ENCODE measurements at regions of chr1 and their contacts with region 1.

Region 1: GRCh38 chr1:26744075-26744959 is 43.4 kb upstream of the PIGV start:
- DNase-seq: peak; percentile 30 to 86 (median 79)
- ATAC-seq: peak; percentile 97
- H3K4me3 ChIP-seq: peak overlapping the region; percentile 39
- H3K4me3 Mint-ChIP-seq: peak overlapping the region; percentile 69 to 86 (median 77)
- H3K27ac ChIP-seq: peak overlapping the region; percentile 62
- H3K27ac Mint-ChIP-seq: peak overlapping the region; percentile 56 to 97 (median 90)
- H3K4me1 ChIP-seq: peaks cover 44 to 84% of the 10 kb centered on the region in 2 donors
- H3K4me1 Mint-ChIP-seq: peaks cover 59 to 96% (median 85%) of the 10 kb centered on the region in 7 donors
- H3K27me3 ChIP-seq: no peaks in the 10 kb centered on the region
- H3K27me3 Mint-ChIP-seq: no peaks in the 10 kb centered on the region

Region 2: GRCh38 chr1:26541816-26542711 is 202.3 kb before region 1 on chr1:
- CTCF ChIA-PET with region 1: no interaction called
- POLR2A ChIA-PET with region 1: no interaction called
- intact Hi-C with region 1: loop called in 1 of 2 experiments (anchors 2 kb)
- DNase-seq: peak; percentile 56 to 84 (median 66)
- ATAC-seq: peak; percentile 72
- H3K4me3 ChIP-seq: peak overlapping the region; percentile 33
- H3K4me3 Mint-ChIP-seq: peak overlapping the region; percentile 75 to 91 (median 84)
- H3K27ac ChIP-seq: peak overlapping the region; percentile 71
- H3K27ac Mint-ChIP-seq: peak overlapping the region; percentile 82 to 99 (median 96)
- H3K4me1 ChIP-seq: peaks cover 77 to 89% of the 10 kb centered on the region in 2 donors
- H3K4me1 Mint-ChIP-seq: peaks cover 80 to 94% (median 83%) of the 10 kb centered on the region in 7 donors
- H3K27me3 ChIP-seq: no peaks in the 10 kb centered on the region
- H3K27me3 Mint-ChIP-seq: no peaks in the 10 kb centered on the region

Region 3: DNA sequence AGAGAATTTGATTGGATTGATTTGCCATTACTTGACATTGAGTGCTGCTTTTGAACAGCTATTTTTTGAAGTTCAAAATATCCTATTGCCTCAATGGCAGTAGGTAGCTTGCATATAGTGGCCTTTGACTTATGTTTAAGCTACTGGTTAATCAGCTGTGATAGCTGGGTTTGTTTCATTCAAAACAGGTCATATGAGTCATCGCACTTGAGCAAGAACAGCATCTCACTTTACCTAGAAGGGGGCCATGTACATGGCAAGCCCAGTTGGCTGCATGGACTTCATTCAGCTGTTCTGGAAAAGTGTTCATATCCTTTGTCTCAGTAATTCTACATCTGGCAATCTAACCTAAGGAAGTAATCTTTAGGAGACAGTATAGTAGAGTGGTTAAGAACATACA is 77.5 kb before region 1 on chr1:
- CTCF ChIA-PET with region 1: no interaction called
- POLR2A ChIA-PET with region 1: no interaction called
- intact Hi-C with region 1: no loop called
- DNase-seq: no peak
- ATAC-seq: no peak
- H3K4me3 ChIP-seq: no peak overlapping the region
- H3K4me3 Mint-ChIP-seq: no peak overlapping the region
- H3K27ac ChIP-seq: no peak overlapping the region
- H3K27ac Mint-ChIP-seq: no peak overlapping the region
- H3K4me1 ChIP-seq: no peaks in the 10 kb centered on the region
- H3K4me1 Mint-ChIP-seq: peaks cover 0 to 1% (median 0%) of the 10 kb centered on the region in 7 donors
- H3K27me3 ChIP-seq: no peaks in the 10 kb centered on the region
- H3K27me3 Mint-ChIP-seq: no peaks in the 10 kb centered on the region

Region 4: GRCh38 chr1:26705788-26706311 is 38.5 kb before region 1 on chr1:
- CTCF ChIA-PET with region 1: interaction called, 5 read pairs
- POLR2A ChIA-PET with region 1: interaction called, 10 read pairs
- intact Hi-C with region 1: no loop called
- DNase-seq: no peak
- ATAC-seq: peak; percentile 31
- H3K4me3 ChIP-seq: no peak overlapping the region
- H3K4me3 Mint-ChIP-seq: peak overlapping the region in 9 of 10 donors; percentile 26 to 80 (median 74)
- H3K27ac ChIP-seq: peak overlapping the region; percentile 20
- H3K27ac Mint-ChIP-seq: peak overlapping the region in 8 of 9 donors; percentile 21 to 77 (median 68)
- H3K4me1 ChIP-seq: peaks cover 59 to 61% of the 10 kb centered on the region in 2 donors
- H3K4me1 Mint-ChIP-seq: peaks cover 19 to 47% (median 30%) of the 10 kb centered on the region in 7 donors
- H3K27me3 ChIP-seq: no peaks in the 10 kb centered on the region
- H3K27me3 Mint-ChIP-seq: no peaks in the 10 kb centered on the region

Region 5: GRCh38 chr1:26723013-26723991 is 21.0 kb before region 1 on chr1:
- CTCF ChIA-PET with region 1: interaction called, 3 read pairs
- POLR2A ChIA-PET with region 1: interaction called, 41 read pairs
- intact Hi-C with region 1: loop called (anchors 1 kb)
- DNase-seq: peak in 6 of 9 donors; percentile 18 to 77 (median 36)
- ATAC-seq: peak; percentile 80
- H3K4me3 ChIP-seq: peak overlapping the region; percentile 37
- H3K4me3 Mint-ChIP-seq: peak overlapping the region; percentile 64 to 89 (median 81)
- H3K27ac ChIP-seq: peak overlapping the region; percentile 58
- H3K27ac Mint-ChIP-seq: peak overlapping the region; percentile 8 to 92 (median 77)
- H3K4me1 ChIP-seq: peaks cover 77 to 81% of the 10 kb centered on the region in 2 donors
- H3K4me1 Mint-ChIP-seq: peaks cover 80 to 93% (median 89%) of the 10 kb centered on the region in 7 donors
- H3K27me3 ChIP-seq: no peaks in the 10 kb centered on the region
- H3K27me3 Mint-ChIP-seq: no peaks in the 10 kb centered on the region

Region 6: DNA sequence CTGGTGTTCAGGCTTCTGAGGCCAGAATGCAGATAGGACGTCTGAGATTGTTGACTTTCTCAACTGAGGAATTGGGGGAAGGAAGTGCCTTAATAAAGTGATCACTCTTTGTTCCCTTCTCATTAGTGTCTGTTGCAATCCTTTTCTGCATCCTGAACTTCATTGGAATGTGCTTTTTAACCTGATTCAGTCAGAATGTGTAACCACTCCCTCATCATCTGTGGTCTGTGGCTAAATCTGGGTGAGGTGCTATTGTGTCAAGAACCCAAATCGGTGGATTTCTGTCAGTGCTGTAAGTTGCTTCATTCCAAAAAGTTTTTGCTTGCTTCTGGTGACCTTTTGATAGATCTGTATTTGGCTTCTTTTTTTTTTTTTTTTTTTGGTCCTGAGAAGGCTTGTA is 10.3 kb before region 1 on chr1:
- CTCF ChIA-PET with region 1: interaction called, 5 read pairs
- POLR2A ChIA-PET with region 1: interaction called, 17 read pairs
- intact Hi-C with region 1: loop called in 1 of 2 experiments (anchors 1 kb)
- DNase-seq: no peak
- ATAC-seq: peak; percentile 38
- H3K4me3 ChIP-seq: no peak overlapping the region
- H3K4me3 Mint-ChIP-seq: peak overlapping the region in 9 of 10 donors; percentile 5 to 72 (median 36)
- H3K27ac ChIP-seq: peak overlapping the region; percentile 45
- H3K27ac Mint-ChIP-seq: peak overlapping the region; percentile 62 to 89 (median 79)
- H3K4me1 ChIP-seq: peaks cover 20 to 27% of the 10 kb centered on the region in 2 donors
- H3K4me1 Mint-ChIP-seq: peaks cover 42 to 78% (median 65%) of the 10 kb centered on the region in 7 donors
- H3K27me3 ChIP-seq: no peaks in the 10 kb centered on the region
- H3K27me3 Mint-ChIP-seq: no peaks in the 10 kb centered on the region

Region 7: GRCh38 chr1:26761217-26761616 is 16.9 kb after region 1 on chr1:
- CTCF ChIA-PET with region 1: interaction called, 5 read pairs
- POLR2A ChIA-PET with region 1: interaction called, 4 read pairs
- intact Hi-C with region 1: loop called in 1 of 2 experiments (anchors 2 kb)
- DNase-seq: no peak
- ATAC-seq: no peak
- H3K4me3 ChIP-seq: no peak overlapping the region
- H3K4me3 Mint-ChIP-seq: no peak overlapping the region
- H3K27ac ChIP-seq: no peak overlapping the region
- H3K27ac Mint-ChIP-seq: peak overlapping the region in 3 of 9 donors; percentile 22 to 85 (median 52)
- H3K4me1 ChIP-seq: peaks cover 0 to 2% of the 10 kb centered on the region in 2 donors
- H3K4me1 Mint-ChIP-seq: peaks cover 7 to 42% (median 28%) of the 10 kb centered on the region in 7 donors
- H3K27me3 ChIP-seq: no peaks in the 10 kb centered on the region
- H3K27me3 Mint-ChIP-seq: no peaks in the 10 kb centered on the region

Region 8: DNA sequence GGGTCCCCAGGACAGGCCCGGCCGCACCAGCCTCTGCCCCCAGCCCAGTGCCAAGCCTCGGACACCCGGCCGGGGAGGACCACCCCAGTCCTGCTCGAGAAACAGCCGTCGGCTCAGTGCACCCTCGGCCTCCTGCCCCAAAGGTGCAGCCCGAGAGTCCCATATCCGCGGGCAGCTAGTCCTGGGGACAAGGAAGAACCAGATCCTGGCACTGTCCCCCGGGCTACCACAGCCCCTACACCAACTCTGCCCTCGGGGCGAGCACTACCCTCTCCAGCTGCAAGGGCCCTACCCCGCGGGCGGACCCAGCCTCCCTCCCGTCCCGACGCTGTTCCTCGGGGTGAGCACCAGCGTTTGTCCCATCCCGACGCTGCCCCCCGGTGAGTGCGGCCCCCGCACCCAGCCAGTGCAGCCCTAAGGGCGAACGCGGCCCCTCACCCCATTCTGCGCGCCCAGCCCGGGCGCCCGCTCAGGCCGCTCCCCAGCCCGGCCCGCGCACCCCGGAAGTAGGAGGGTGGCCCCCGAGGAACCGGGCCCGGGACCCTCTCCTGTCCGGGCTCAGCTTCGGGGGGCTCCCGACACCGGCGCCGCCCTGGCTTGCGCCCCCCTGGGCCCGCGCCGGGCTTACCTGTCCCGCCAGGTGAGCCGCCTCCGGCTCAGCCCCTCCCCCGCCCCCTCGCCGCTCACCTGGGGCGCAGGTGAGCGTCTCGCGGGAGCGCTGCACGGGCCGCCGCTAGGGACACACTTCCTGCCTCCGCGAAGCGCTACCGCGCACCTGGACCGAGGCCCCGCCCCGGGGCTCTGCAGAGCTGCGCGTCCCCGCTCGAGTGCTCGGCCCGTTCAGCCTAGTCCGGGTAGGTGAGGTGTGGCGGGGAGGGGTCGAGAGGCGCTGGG is 215.7 kb after region 1 on chr1 and contains the start of gene KDF1:
- CTCF ChIA-PET with region 1: no interaction called
- POLR2A ChIA-PET with region 1: no interaction called
- intact Hi-C with region 1: no loop called
- DNase-seq: peak; percentile 25 to 65 (median 63)
- ATAC-seq: peak; percentile 93
- H3K4me3 ChIP-seq: peak within 1 kb of the TSS; percentile 61
- H3K4me3 Mint-ChIP-seq: peak within 1 kb of the TSS; percentile 74 to 90 (median 84)
- H3K27ac ChIP-seq: no peak within 1 kb of the TSS
- H3K27ac Mint-ChIP-seq: peak within 1 kb of the TSS in 7 of 9 donors; percentile 38 to 83 (median 67)
- H3K4me1 ChIP-seq: peaks cover 6 to 8% of the 10 kb centered on the region in 2 donors
- H3K4me1 Mint-ChIP-seq: peaks cover 5 to 11% (median 6%) of the 10 kb centered on the region in 7 donors
- H3K27me3 ChIP-seq: peaks cover 0 to 6% of the 10 kb centered on the region in 2 donors
- H3K27me3 Mint-ChIP-seq: peaks cover 8 to 76% (median 18%) of the 10 kb centered on the region in 5 donors
- total RNA-seq, gene KDF1: 1.7 to 2.2 (median 2.2) TPM in 4 of 5 experiments, not detected in the other